ENCODE measurements at regions of chr10 and their contacts with region 1.

Region 1: DNA sequence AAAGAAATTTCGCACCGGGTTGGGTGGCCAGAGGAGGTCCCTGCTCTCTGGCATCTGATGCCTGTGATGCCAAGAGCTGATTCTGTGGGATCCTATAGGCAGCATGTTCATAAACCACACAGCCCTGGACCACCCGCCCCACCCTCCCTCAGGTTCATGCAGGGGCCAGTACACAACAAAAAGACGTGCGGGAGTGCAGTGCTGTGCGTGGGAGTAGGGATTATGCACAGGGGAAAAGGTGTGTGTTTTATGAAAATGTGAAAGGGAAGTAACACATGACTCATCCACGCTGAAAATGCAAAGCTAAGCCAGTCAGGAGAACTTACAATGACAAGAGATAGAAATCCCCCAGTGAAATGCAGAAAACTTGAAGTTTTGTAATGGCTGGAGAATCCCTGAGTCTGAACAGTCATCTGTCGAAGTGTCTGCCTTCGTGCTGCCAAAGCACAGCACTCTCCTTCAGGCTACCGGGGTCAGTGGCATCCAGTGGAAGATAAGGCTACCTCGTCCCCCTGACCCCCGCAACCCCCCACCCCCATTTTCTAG is 1.1 kb downstream of the KIAA1217 start:
- DNase-seq: peak; percentile 78
- H3K4me3 Mint-ChIP-seq: peak overlapping the region; percentile 69
- H3K27ac Mint-ChIP-seq: peak overlapping the region; percentile 76
- H3K4me1 Mint-ChIP-seq: peaks cover 29% of the 10 kb centered on the region
- H3K27me3 Mint-ChIP-seq: peaks cover 47% of the 10 kb centered on the region

Region 2: GRCh38 chr10:23293145-23293724 is 916.8 kb before region 1 on chr10:
- CTCF ChIA-PET with region 1: no interaction called
- intact Hi-C with region 1: no loop called
- DNase-seq: peak; percentile 71
- H3K4me3 Mint-ChIP-seq: no peak overlapping the region
- H3K27ac Mint-ChIP-seq: no peak overlapping the region
- H3K4me1 Mint-ChIP-seq: peaks cover 2% of the 10 kb centered on the region
- H3K27me3 Mint-ChIP-seq: peaks cover 14% of the 10 kb centered on the region

Region 3: GRCh38 chr10:23448802-23449570 is 761.0 kb before region 1 on chr10:
- CTCF ChIA-PET with region 1: no interaction called
- intact Hi-C with region 1: loop called (anchors 1 kb)
- DNase-seq: no peak
- H3K4me3 Mint-ChIP-seq: peak overlapping the region; percentile 35
- H3K27ac Mint-ChIP-seq: peak overlapping the region; percentile 92
- H3K4me1 Mint-ChIP-seq: peaks cover 42% of the 10 kb centered on the region
- H3K27me3 Mint-ChIP-seq: no peaks in the 10 kb centered on the region

Region 4: GRCh38 chr10:23702977-23703414 is 507.0 kb before region 1 on chr10:
- CTCF ChIA-PET with region 1: no interaction called
- intact Hi-C with region 1: loop called (anchors 5 kb)
- DNase-seq: peak; percentile 72
- H3K4me3 Mint-ChIP-seq: no peak overlapping the region
- H3K27ac Mint-ChIP-seq: no peak overlapping the region
- H3K4me1 Mint-ChIP-seq: peaks cover 13% of the 10 kb centered on the region
- H3K27me3 Mint-ChIP-seq: peaks cover 20% of the 10 kb centered on the region

Region 5: GRCh38 chr10:24383681-24384106 is 173.7 kb after region 1 on chr10:
- CTCF ChIA-PET with region 1: no interaction called
- intact Hi-C with region 1: loop called (anchors 1 kb)
- DNase-seq: peak; percentile 71
- H3K4me3 Mint-ChIP-seq: peak overlapping the region; percentile 21
- H3K27ac Mint-ChIP-seq: peak overlapping the region; percentile 86
- H3K4me1 Mint-ChIP-seq: peaks cover 12% of the 10 kb centered on the region
- H3K27me3 Mint-ChIP-seq: peaks cover 21% of the 10 kb centered on the region

Region 6: DNA sequence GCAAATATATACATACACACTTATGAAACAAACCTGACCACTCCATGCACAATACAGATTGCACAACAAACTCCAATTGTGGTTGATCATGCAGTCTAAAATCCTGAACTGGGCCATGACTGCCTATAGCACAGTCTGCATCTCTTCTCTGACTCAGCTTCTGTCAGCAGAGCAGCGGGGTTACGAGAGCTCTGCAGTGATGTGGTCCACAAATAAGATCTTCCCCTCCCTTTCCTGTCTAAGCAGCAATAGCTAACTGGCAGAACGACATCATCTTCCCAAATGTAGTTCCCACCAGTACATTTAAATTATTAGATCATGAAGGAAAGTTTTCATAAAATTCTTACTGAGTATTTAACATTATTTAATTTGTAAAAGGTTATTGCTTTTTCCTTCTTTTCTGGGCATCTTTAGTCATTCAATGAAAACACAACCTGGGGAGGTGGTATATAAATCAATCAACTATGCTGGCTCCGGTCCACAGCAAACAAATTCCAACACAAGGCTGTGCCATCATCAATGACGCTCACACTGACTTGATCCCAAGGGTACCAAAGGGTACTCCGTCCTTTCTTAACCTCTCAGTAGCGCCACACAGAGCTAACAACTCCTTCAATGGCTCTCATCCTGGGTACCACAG is 496.6 kb after region 1 on chr10:
- CTCF ChIA-PET with region 1: no interaction called
- intact Hi-C with region 1: loop called (anchors 5 kb)
- DNase-seq: peak; percentile 58
- H3K4me3 Mint-ChIP-seq: no peak overlapping the region
- H3K27ac Mint-ChIP-seq: no peak overlapping the region
- H3K4me1 Mint-ChIP-seq: peaks cover 5% of the 10 kb centered on the region
- H3K27me3 Mint-ChIP-seq: peaks cover 2% of the 10 kb centered on the region

Region 7: DNA sequence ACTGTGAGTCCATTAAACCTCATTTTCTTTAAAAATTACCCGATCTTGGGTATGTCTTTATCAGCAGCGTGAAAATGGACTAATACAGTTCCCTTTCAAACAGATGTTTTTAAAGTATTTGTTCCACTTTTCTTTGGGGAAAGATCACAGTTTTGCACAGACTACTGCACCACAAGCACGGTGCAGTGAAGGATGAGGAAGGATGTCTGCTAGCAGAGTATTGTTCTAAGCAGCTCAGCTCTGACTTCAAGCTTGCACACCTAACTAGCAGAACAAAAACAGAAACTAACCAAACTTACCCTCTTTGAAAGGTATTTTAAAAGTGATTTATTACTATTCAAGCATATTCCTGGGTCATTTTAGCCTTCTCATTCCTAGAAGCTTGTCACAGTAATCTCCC is 826.4 kb after region 1 on chr10:
- CTCF ChIA-PET with region 1: no interaction called
- intact Hi-C with region 1: no loop called
- DNase-seq: no peak
- H3K4me3 Mint-ChIP-seq: no peak overlapping the region
- H3K27ac Mint-ChIP-seq: no peak overlapping the region
- H3K4me1 Mint-ChIP-seq: no peaks in the 10 kb centered on the region
- H3K27me3 Mint-ChIP-seq: peaks cover 17% of the 10 kb centered on the region

Measured in activated naive CD4-positive, alpha-beta T cell treated with anti-CD3 and anti-CD28 coated beads for 36 hours (primary cell).